MCF 10A (cell line): ENCODE measurements at regions of chr9 and their contacts with region 1.

Region 1: GRCh38 chr9:131733541-131734061 is 6.3 kb downstream of the RAPGEF1 start:
- DNase-seq: peak; percentile 90
- H3K4me3 Mint-ChIP-seq: peak overlapping the region; percentile 52
- H3K27ac Mint-ChIP-seq: peak overlapping the region; percentile 72
- H3K4me1 Mint-ChIP-seq: peaks cover 56% of the 10 kb centered on the region
- H3K27me3 Mint-ChIP-seq: no peaks in the 10 kb centered on the region
- CTCF ChIP-seq: no peak

Region 2: GRCh38 chr9:131608493-131609037 is 125.0 kb before region 1 on chr9:
- CTCF ChIA-PET with region 1: interaction called, 43 read pairs
- POLR2A ChIA-PET with region 1: interaction called, 41 read pairs
- intact Hi-C with region 1: no loop called
- DNase-seq: peak; percentile 84
- H3K4me3 Mint-ChIP-seq: peak overlapping the region; percentile 54
- H3K27ac Mint-ChIP-seq: peak overlapping the region; percentile 73
- H3K4me1 Mint-ChIP-seq: peaks cover 29% of the 10 kb centered on the region
- H3K27me3 Mint-ChIP-seq: no peaks in the 10 kb centered on the region
- CTCF ChIP-seq: no peak

Region 3: DNA sequence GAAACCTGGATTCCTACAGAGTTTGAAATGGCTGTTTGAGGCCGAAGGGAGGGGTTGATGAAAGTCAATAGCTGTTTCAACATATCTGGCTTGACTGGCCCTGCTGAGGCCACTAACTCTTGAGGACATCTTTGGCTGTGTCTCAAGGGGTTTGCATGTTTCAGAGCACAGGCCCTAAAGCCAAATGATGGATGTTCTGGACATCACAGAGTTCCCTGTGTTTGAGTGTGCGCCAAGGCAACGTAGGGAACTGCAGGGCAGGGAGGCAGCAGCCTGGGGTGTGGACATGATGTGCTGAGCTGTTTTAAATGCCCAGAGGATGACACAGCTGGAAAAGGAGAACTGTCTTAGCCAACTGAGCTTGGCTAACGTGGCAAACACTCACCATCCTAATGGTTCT is 83.3 kb before region 1 on chr9:
- CTCF ChIA-PET with region 1: interaction called, 4 read pairs
- POLR2A ChIA-PET with region 1: interaction called, 24 read pairs
- intact Hi-C with region 1: loop called (anchors 5 kb)
- DNase-seq: peak; percentile 83
- H3K4me3 Mint-ChIP-seq: peak overlapping the region; percentile 71
- H3K27ac Mint-ChIP-seq: peak overlapping the region; percentile 99
- H3K4me1 Mint-ChIP-seq: peaks cover 26% of the 10 kb centered on the region
- H3K27me3 Mint-ChIP-seq: no peaks in the 10 kb centered on the region
- CTCF ChIP-seq: no peak

Region 4: DNA sequence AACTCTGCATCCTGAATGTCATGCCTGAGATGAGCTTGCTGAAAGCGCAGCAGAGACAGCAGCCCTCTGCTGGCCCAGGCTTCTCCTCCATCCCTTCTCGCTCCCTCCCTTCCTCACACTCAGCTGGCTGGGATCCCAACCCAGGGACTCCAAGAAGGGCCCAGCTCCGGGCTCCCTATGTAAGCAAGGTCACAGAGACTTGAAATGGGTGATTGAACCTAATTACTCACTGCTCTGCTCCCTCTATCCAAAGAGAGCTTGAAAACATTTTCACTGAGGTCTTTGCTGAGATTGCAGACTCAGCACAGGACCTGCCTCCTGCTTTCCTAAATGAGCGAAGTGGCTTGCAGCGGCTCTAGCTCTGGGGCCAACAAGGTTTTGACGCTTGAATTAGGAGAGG is 36.5 kb before region 1 on chr9:
- CTCF ChIA-PET with region 1: no interaction called
- POLR2A ChIA-PET with region 1: interaction called, 32 read pairs
- intact Hi-C with region 1: no loop called
- DNase-seq: no peak
- H3K4me3 Mint-ChIP-seq: no peak overlapping the region
- H3K27ac Mint-ChIP-seq: no peak overlapping the region
- H3K4me1 Mint-ChIP-seq: peaks cover 24% of the 10 kb centered on the region
- H3K27me3 Mint-ChIP-seq: no peaks in the 10 kb centered on the region
- CTCF ChIP-seq: no peak

Region 5: DNA sequence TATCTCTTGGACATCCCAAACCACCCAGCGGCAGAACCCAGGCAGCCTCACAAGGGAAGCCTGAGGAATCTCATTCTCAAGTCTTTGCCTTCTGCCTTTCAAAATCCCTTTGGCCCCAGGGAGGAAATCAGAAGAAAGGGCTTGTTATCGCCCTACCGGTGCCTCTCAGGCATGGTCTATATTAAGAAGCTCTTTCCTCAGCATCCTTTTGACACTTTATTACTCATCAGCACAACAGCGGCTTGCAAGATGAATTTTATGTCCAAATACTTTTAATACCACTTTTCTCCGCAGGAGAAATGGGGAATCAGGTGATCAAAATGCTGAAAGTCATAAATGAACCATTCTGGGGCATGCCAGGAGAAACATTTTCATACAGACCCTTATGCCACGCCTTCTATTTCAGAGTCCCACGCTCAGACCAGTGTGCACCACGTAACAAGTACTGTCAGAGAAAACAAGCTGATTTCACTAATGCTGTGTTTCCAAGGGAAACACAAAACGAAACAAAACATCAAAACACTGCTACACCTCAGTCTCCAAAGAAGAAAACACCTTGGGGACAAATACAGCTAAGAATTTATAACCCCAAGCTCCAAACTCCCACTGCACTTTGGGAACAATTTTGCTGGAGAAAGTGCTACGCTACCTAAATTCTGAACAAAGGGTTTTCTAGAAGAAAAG is 23.7 kb before region 1 on chr9:
- CTCF ChIA-PET with region 1: interaction called, 4 read pairs
- POLR2A ChIA-PET with region 1: interaction called, 49 read pairs
- intact Hi-C with region 1: loop called (anchors 1 kb)
- DNase-seq: peak; percentile 17
- H3K4me3 Mint-ChIP-seq: no peak overlapping the region
- H3K27ac Mint-ChIP-seq: peak overlapping the region; percentile 67
- H3K4me1 Mint-ChIP-seq: peaks cover 38% of the 10 kb centered on the region
- H3K27me3 Mint-ChIP-seq: no peaks in the 10 kb centered on the region
- CTCF ChIP-seq: no peak